B cell (primary cell): ENCODE measurements at regions of chr22 and their contacts with region 1.

Region 1: DNA sequence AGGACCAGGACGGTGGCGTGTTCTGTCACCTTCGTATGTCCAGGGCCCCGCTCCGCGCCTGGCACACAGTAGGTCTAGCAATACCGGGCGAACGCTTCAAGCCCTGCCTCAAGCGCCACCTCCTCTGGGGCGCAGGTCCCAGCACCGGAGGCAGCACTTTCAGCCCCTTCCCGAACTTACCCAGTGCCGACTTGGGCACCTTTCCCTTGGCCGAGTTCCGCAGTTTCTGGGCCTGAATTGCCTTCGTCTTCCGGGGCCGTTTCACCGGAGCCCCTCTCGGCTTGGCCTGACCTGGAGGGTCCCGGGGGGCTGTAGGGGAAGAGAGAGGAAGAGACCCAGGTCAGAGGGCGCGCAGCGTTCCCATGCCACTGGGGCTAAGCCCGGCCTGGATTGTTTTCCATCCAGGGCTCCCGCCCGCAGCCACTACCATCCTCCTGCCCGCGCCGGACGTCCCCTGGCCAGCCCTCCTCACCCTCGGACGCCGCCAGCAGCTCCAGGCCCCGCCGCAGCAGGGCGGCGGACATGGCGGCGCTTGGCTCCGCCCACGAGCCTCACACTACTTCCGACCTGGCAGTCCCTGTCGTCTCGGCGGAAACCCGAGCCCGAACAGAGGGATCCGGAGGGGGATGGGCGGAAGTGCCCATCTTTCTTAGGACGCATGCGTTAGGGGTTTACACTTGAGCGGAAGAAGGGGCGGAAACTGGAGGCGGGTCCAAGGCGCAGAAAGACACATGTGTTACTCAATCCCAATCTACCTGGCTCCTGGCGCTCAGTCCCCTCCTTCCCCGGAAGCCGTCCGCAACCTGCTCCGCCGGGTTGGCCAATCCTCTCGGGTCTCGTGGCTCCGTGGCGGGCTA is at the start of gene RPS19BP1:
- DNase-seq: peak; percentile 100
- ATAC-seq: peak; percentile 83
- H3K4me3 ChIP-seq: peak within 1 kb of the TSS; percentile 70 to 96 (median 89)
- H3K4me3 Mint-ChIP-seq: peak within 1 kb of the TSS; percentile 91
- H3K27ac ChIP-seq: peak within 1 kb of the TSS; percentile 56 to 94
- H3K27ac Mint-ChIP-seq: peak within 1 kb of the TSS; percentile 94
- H3K4me1 ChIP-seq: peaks cover 45 to 58% of the 10 kb centered on the region in 2 donors
- H3K4me1 Mint-ChIP-seq: peaks cover 54% of the 10 kb centered on the region
- H3K27me3 ChIP-seq: peaks cover 0 to 5% (median 0%) of the 10 kb centered on the region in 4 experiments
- H3K27me3 Mint-ChIP-seq: no peaks in the 10 kb centered on the region
- CTCF ChIP-seq: no peak
- total RNA-seq, gene RPS19BP1: 59.1 and 60.3 TPM in 2 replicates

Region 2: GRCh38 chr22:39152511-39153219 is 379.8 kb before region 1 on chr22 and contains the start of gene CBX7:
- CTCF ChIA-PET with region 1: no interaction called
- POLR2A ChIA-PET with region 1: no interaction called
- intact Hi-C with region 1: loop called (anchors 1 kb)
- DNase-seq: peak; percentile 96
- ATAC-seq: peak; percentile 88
- H3K4me3 ChIP-seq: peak within 1 kb of the TSS; percentile 53 to 97 (median 87)
- H3K4me3 Mint-ChIP-seq: peak within 1 kb of the TSS; percentile 90
- H3K27ac ChIP-seq: peak within 1 kb of the TSS; percentile 81 to 97
- H3K27ac Mint-ChIP-seq: peak within 1 kb of the TSS; percentile 90
- H3K4me1 ChIP-seq: peaks cover 51 to 53% of the 10 kb centered on the region in 2 donors
- H3K4me1 Mint-ChIP-seq: peaks cover 43% of the 10 kb centered on the region
- H3K27me3 ChIP-seq: peaks cover 0 to 14% (median 8%) of the 10 kb centered on the region in 4 experiments
- H3K27me3 Mint-ChIP-seq: peaks cover 33% of the 10 kb centered on the region
- CTCF ChIP-seq: no peak
- total RNA-seq, gene CBX7: 141 and 147 TPM in 2 replicates

Region 3: GRCh38 chr22:39349506-39349966 is 182.9 kb before region 1 on chr22:
- CTCF ChIA-PET with region 1: interaction called, 12 read pairs
- POLR2A ChIA-PET with region 1: no interaction called
- intact Hi-C with region 1: no loop called
- DNase-seq: peak; percentile 73
- ATAC-seq: peak; percentile 21
- H3K4me3 ChIP-seq: peak overlapping the region; percentile 66 to 83 (median 69)
- H3K4me3 Mint-ChIP-seq: peak overlapping the region; percentile 95
- H3K27ac ChIP-seq: peak overlapping the region; percentile 4 to 45
- H3K27ac Mint-ChIP-seq: peak overlapping the region; percentile 94
- H3K4me1 ChIP-seq: peaks cover 31 to 37% of the 10 kb centered on the region in 2 donors
- H3K4me1 Mint-ChIP-seq: peaks cover 35% of the 10 kb centered on the region
- H3K27me3 ChIP-seq: no peaks in the 10 kb centered on the region
- H3K27me3 Mint-ChIP-seq: no peaks in the 10 kb centered on the region
- CTCF ChIP-seq: no peak

Region 4: GRCh38 chr22:39502109-39502788 is 30.2 kb before region 1 on chr22 and contains the start of gene MIEF1:
- CTCF ChIA-PET with region 1: interaction called, 166 read pairs
- POLR2A ChIA-PET with region 1: interaction called, 4 read pairs
- intact Hi-C with region 1: loop called (anchors 1 kb)
- DNase-seq: peak; percentile 93
- ATAC-seq: peak; percentile 98
- H3K4me3 ChIP-seq: peak within 1 kb of the TSS; percentile 48 to 85 (median 83)
- H3K4me3 Mint-ChIP-seq: peak within 1 kb of the TSS; percentile 96
- H3K27ac ChIP-seq: peak within 1 kb of the TSS; percentile 45 to 74
- H3K27ac Mint-ChIP-seq: peak within 1 kb of the TSS; percentile 93
- H3K4me1 ChIP-seq: peaks cover 16 to 25% of the 10 kb centered on the region in 2 donors
- H3K4me1 Mint-ChIP-seq: peaks cover 39% of the 10 kb centered on the region
- H3K27me3 ChIP-seq: no peaks in the 10 kb centered on the region
- H3K27me3 Mint-ChIP-seq: no peaks in the 10 kb centered on the region
- CTCF ChIP-seq: no peak
- total RNA-seq, gene MIEF1: 37.2 and 43.4 TPM in 2 replicates

Region 5: DNA sequence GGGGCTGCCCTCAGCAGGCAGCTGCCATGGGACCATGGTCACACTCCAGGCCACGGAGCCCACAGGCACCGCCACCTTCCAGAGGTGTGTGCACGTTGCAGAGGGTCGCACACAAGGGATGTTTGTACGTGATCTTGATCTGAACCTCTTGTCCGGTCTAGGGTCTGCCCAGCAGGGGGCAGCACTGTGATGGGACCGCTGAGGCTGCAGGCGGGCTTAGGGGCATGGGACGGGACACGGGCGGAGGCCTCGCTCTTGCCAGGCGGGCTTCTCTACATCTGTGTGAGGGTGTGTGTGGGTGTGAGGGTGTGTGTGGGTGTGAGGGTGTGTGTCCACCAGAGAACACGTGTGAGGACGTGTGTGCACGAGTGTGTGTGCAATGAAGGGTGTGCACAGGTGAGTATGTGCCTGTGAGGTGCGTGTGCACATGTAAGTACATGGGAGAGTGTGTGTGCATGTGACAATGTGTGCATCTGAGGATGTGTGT is 90.5 kb after region 1 on chr22:
- CTCF ChIA-PET with region 1: no interaction called
- POLR2A ChIA-PET with region 1: no interaction called
- intact Hi-C with region 1: no loop called
- DNase-seq: peak; percentile 71
- ATAC-seq: peak; percentile 74
- H3K4me3 ChIP-seq: no peak overlapping the region
- H3K4me3 Mint-ChIP-seq: no peak overlapping the region
- H3K27ac ChIP-seq: no peak overlapping the region
- H3K27ac Mint-ChIP-seq: no peak overlapping the region
- H3K4me1 ChIP-seq: peaks cover 4 to 8% of the 10 kb centered on the region in 2 donors
- H3K4me1 Mint-ChIP-seq: peaks cover 4% of the 10 kb centered on the region
- H3K27me3 ChIP-seq: peaks cover 0 to 52% (median 13%) of the 10 kb centered on the region in 4 experiments
- H3K27me3 Mint-ChIP-seq: peaks cover 39% of the 10 kb centered on the region
- CTCF ChIP-seq: peak; percentile 60

Region 6: GRCh38 chr22:39940757-39941305 is 408.4 kb after region 1 on chr22:
- CTCF ChIA-PET with region 1: interaction called, 10 read pairs
- POLR2A ChIA-PET with region 1: no interaction called
- intact Hi-C with region 1: loop called (anchors 2 kb)
- DNase-seq: peak; percentile 63
- ATAC-seq: peak; percentile 71
- H3K4me3 ChIP-seq: no peak overlapping the region
- H3K4me3 Mint-ChIP-seq: no peak overlapping the region
- H3K27ac ChIP-seq: no peak overlapping the region
- H3K27ac Mint-ChIP-seq: peak overlapping the region; percentile 10
- H3K4me1 ChIP-seq: peaks cover 59 to 62% of the 10 kb centered on the region in 2 donors
- H3K4me1 Mint-ChIP-seq: peaks cover 62% of the 10 kb centered on the region
- H3K27me3 ChIP-seq: no peaks in the 10 kb centered on the region
- H3K27me3 Mint-ChIP-seq: no peaks in the 10 kb centered on the region
- CTCF ChIP-seq: peak; percentile 53

Region 7: GRCh38 chr22:40044102-40044869 is 511.8 kb after region 1 on chr22:
- CTCF ChIA-PET with region 1: interaction called, 19 read pairs
- POLR2A ChIA-PET with region 1: interaction called, 5 read pairs
- intact Hi-C with region 1: loop called (anchors 1 kb)
- DNase-seq: peak; percentile 99
- ATAC-seq: peak; percentile 84
- H3K4me3 ChIP-seq: peak overlapping the region; percentile 65 to 98 (median 97)
- H3K4me3 Mint-ChIP-seq: peak overlapping the region; percentile 95
- H3K27ac ChIP-seq: peak overlapping the region; percentile 97 to 100
- H3K27ac Mint-ChIP-seq: peak overlapping the region; percentile 99
- H3K4me1 ChIP-seq: peaks cover 39 to 43% of the 10 kb centered on the region in 2 donors
- H3K4me1 Mint-ChIP-seq: peaks cover 40% of the 10 kb centered on the region
- H3K27me3 ChIP-seq: peaks cover 0 to 14% (median 2%) of the 10 kb centered on the region in 4 experiments
- H3K27me3 Mint-ChIP-seq: peaks cover 7% of the 10 kb centered on the region
- CTCF ChIP-seq: no peak